ENCODE measurements at regions of chr9 and their contacts with region 1.

Region 1: DNA sequence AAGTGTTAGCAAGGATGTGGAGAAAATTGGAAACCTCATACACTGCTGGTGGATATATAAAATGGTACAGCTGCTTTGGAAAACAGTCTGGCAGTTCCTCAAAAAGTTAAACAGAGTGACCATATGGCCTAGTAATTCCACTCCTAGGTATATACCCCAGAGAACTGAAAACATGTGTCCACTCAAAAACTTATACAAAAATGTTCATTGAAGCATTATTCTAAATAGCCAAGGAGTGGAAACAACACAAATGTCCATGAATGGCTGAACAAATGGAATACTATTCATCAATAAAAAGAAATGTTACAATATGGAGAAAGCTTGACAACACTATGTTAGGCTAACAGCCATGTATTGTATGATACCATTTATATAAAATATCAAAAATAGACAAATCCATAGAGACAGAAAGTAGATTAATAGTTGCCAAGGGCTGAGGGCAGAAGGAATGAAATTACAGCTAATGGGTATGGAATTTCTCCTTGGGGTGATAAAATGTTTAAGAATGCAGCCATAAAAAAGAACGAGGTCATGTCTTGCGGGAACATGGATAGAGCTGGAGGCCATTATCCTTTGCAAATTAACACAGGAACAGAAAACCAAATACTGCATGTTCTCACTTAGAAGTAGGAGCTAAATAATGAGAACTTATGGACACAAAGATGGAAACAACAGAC is 33.6 kb upstream of the FBP1 start:
- DNase-seq: no peak
- ATAC-seq: no peak
- H3K4me3 ChIP-seq: no peak overlapping the region
- H3K27ac ChIP-seq: no peak overlapping the region
- H3K4me1 ChIP-seq: peaks cover 9 to 35% (median 20%) of the 10 kb centered on the region in 9 donors
- H3K27me3 ChIP-seq: no peaks in the 10 kb centered on the region
- CTCF ChIP-seq: no peak

Region 2: GRCh38 chr9:94639061-94639998 is 33.6 kb before region 1 on chr9 and contains the start of gene FBP1:
- intact Hi-C with region 1: no loop called
- DNase-seq: peak; percentile 27 to 40
- ATAC-seq: peak; percentile 45 to 77 (median 61)
- H3K4me3 ChIP-seq: peak within 1 kb of the TSS; percentile 46 to 76 (median 62)
- H3K27ac ChIP-seq: peak within 1 kb of the TSS in 3 of 10 donors; percentile 4 to 90 (median 4)
- H3K4me1 ChIP-seq: peaks cover 0 to 31% (median 7%) of the 10 kb centered on the region in 9 donors
- H3K27me3 ChIP-seq: peaks cover 7 to 20% (median 11%) of the 10 kb centered on the region in 7 donors
- CTCF ChIP-seq: no peak
- total RNA-seq, gene FBP1: 0.16 to 9.7 (median 0.52) TPM

Region 3: DNA sequence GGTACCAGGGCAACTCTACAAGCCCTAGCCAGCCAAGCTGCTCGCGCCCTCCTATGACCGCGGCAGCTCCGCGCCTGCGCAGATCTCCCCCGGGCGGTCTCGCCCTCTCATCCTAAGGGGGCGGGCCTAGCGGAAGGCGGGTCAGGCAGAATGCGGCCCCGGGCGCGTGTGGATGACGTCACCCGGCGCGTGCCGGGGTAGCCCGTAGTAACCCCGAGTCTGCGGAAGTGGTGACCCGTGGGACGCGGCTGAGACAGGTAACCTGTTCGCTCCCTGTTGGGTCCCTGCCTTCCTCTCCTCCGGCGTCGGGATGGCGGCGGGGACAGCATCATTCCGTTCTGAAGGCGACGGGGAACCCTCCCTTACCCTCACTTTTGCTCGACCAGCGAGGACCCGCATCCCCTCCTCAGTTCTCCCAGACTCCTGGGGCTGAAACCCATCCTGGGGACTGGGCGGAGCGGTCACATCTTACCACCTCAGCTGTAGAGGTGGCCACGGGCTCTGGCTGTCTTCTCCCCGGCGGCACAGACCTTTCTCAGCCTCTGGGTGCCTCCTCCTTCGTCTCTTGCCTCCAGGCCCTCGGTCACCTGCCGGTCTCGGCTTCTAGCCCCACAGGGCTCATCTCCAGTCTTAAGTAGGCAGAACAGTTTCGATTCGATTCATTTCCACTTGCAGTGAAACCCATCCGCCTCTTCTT is 53.7 kb after region 1 on chr9 and contains the start of gene AOPEP:
- intact Hi-C with region 1: no loop called
- DNase-seq: peak; percentile 98 to 99
- ATAC-seq: peak; percentile 99 to 100 (median 100)
- H3K4me3 ChIP-seq: peak within 1 kb of the TSS; percentile 69 to 94 (median 86)
- H3K27ac ChIP-seq: peak within 1 kb of the TSS in 9 of 10 donors; percentile 79 to 92 (median 89)
- H3K4me1 ChIP-seq: peaks cover 0 to 15% (median 8%) of the 10 kb centered on the region in 9 donors
- H3K27me3 ChIP-seq: no peaks in the 10 kb centered on the region
- CTCF ChIP-seq: no peak
- total RNA-seq, gene AOPEP: 133 to 250 (median 161) TPM

Region 4: DNA sequence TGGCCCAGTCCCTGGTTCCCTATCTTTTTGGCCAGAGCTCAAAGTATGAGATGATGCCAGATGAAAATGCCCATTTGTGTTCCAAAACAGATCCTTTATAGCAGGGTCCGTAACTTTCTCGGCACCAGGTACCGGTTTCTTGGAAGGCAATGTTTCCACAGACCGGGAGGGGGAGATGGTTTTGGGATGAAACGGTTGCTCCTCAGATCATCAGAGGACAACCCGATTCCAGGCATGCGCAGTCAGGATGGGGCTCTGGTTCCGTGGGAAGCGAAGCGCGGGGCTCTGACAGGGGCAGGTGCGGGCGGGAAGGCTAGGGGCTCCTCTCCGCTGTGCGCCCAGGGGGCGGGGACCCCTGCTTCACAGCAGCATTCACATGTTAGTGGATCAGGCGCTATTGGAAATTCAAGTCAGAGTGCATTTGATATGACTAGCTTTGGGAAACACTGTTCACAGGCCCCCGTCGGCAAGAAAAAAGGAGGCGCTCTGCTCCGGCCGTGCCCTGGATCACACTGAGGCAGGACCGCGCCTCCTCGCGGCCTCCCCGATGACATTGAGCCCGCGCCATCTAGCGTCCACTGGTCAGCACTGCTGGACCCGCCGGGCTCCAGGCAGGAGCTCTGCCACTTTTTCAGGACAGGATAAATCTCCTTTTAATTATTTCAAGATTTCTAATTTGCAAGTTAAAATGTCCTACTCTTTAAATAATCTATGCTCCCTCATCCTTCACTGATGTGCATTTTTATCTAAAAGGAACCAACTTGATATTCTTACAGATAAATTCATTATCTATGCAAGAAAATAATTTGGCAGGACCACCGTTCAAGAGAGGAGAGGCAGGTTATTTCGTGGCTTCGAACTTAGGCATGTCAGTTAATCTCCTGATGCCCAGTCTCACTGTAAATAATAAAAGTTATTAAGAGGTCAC is 454.6 kb after region 1 on chr9:
- intact Hi-C with region 1: loop called in 1 of 10 experiments (anchors 5 kb)
- DNase-seq: peak; percentile 86 to 87
- ATAC-seq: peak; percentile 83 to 94 (median 90)
- H3K4me3 ChIP-seq: peak overlapping the region in 9 of 10 donors; percentile 21 to 53 (median 43)
- H3K27ac ChIP-seq: peak overlapping the region in 1 of 10 donors; percentile 36
- H3K4me1 ChIP-seq: peaks cover 0 to 11% (median 6%) of the 10 kb centered on the region in 9 donors
- H3K27me3 ChIP-seq: no peaks in the 10 kb centered on the region
- CTCF ChIP-seq: peak; percentile 92 to 100 (median 98)

Region 5: GRCh38 chr9:95268681-95269080 is 595.7 kb after region 1 on chr9:
- intact Hi-C with region 1: loop called in 1 of 10 experiments (anchors 10 kb)
- DNase-seq: peak in 1 of 2 donors; percentile 22
- ATAC-seq: peak in 6 of 8 donors; percentile 61 to 76 (median 72)
- H3K4me3 ChIP-seq: no peak overlapping the region
- H3K27ac ChIP-seq: no peak overlapping the region
- H3K4me1 ChIP-seq: no peaks in the 10 kb centered on the region
- H3K27me3 ChIP-seq: no peaks in the 10 kb centered on the region
- CTCF ChIP-seq: peak in 7 of 9 donors; percentile 29 to 63 (median 49)

Measured in heart right ventricle (tissue), 16 donors.